ENCODE measurements at regions of chr17 and their contacts with region 1.

Region 1: GRCh38 chr17:73231841-73232586 is 29.7 kb downstream of the CPSF4L start:
- DNase-seq: peak; percentile 99
- H3K4me3 Mint-ChIP-seq: peak overlapping the region; percentile 95
- H3K27ac Mint-ChIP-seq: peak overlapping the region; percentile 95
- H3K4me1 Mint-ChIP-seq: peaks cover 45% of the 10 kb centered on the region
- H3K27me3 Mint-ChIP-seq: no peaks in the 10 kb centered on the region

Region 2: DNA sequence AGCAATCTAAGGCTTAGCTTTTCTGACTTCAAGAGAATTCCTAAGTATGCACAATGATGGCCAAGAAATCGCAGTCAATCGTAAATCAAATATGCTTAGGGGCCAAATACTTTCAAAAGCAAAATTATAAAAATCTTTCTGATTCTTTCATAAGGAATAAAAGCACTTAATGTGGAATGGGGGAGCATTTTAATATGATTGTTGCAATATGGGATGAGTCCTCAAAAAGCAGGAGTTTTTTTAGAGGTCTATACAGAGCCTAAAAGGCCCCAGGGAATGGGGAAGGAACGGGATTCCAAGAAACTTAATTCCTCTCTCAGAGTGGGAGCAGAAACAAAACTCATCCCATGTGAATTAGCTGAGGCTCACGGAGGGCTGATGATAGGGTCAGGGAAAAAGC is 124.8 kb before region 1 on chr17:
- intact Hi-C with region 1: no loop called
- DNase-seq: no peak
- H3K4me3 Mint-ChIP-seq: no peak overlapping the region
- H3K27ac Mint-ChIP-seq: no peak overlapping the region
- H3K4me1 Mint-ChIP-seq: no peaks in the 10 kb centered on the region
- H3K27me3 Mint-ChIP-seq: peaks cover 1% of the 10 kb centered on the region

Region 3: GRCh38 chr17:73192894-73193701 is 38.9 kb before region 1 on chr17 and contains the start of gene COG1:
- intact Hi-C with region 1: loop called (anchors 1 kb)
- DNase-seq: peak; percentile 90
- H3K4me3 Mint-ChIP-seq: peak within 1 kb of the TSS; percentile 93
- H3K27ac Mint-ChIP-seq: peak within 1 kb of the TSS; percentile 97
- H3K4me1 Mint-ChIP-seq: peaks cover 18% of the 10 kb centered on the region
- H3K27me3 Mint-ChIP-seq: no peaks in the 10 kb centered on the region
- total RNA-seq, gene COG1: 30.0 and 32.7 TPM in 2 replicates

Region 4: DNA sequence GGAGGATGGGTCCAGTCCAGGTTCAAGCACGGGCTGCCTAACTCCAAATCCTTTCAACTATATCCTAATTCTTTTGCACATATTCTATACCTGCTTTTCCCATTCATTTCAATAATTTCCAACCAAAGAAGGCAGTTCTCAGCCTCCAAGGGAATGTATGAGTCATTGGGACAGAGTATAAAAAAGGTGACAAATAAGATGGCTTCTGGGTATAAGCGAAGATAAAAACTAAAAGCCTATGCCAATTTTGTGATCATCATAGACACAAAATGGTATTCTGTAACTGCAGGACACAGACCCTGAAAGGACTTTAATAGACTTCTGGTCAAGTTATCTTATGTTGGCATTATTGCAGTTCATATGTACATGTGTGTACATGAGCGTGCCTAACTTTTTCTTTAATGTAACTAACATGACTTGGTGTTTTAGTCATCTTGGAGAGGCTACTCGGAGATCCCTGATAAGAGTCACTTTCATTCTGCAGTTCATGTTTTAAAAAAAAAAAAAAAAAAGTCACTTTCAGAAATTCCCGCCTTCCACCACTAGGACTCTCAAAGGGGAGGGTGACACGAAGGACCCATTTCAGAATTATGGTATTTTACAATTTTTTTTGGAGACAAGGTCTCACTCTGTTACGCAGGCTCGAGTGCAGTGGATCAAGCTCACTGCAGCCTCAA is 21.9 kb before region 1 on chr17:
- intact Hi-C with region 1: loop called (anchors 2 kb)
- DNase-seq: no peak
- H3K4me3 Mint-ChIP-seq: no peak overlapping the region
- H3K27ac Mint-ChIP-seq: peak overlapping the region; percentile 71
- H3K4me1 Mint-ChIP-seq: peaks cover 21% of the 10 kb centered on the region
- H3K27me3 Mint-ChIP-seq: no peaks in the 10 kb centered on the region

Region 5: GRCh38 chr17:73278465-73279453 is 46.7 kb after region 1 on chr17:
- intact Hi-C with region 1: no loop called
- DNase-seq: no peak
- H3K4me3 Mint-ChIP-seq: no peak overlapping the region
- H3K27ac Mint-ChIP-seq: no peak overlapping the region
- H3K4me1 Mint-ChIP-seq: no peaks in the 10 kb centered on the region
- H3K27me3 Mint-ChIP-seq: no peaks in the 10 kb centered on the region

Region 6: DNA sequence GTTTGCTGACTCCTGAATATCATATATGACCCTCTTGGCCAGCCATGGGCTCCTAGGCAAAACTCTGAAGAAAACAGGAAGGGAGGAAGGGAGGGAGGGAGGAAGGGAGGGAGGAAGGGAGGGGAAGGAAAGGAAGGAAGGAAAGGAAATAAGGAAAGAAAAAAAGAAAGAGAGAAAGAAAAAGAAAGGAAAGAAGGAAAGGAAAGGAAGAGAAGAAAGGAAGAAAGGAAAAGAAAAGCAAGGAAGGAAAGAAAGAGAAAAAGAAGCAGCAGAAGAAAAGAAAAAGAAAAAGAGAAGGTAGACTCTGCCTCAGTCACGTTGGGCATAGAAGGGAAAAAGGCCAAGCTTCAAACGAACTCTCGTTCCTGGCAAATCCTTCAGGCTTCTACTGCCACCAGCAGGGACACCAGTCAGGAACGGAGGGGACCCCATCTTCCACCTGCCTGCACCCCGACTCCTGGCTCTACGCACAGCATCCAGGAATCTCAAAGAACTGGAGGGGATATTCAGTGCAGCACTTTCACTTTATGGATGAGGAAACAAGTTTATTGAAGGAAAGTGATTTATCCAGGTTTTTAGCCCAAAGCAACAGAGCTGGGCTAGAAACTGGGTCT is 57.7 kb after region 1 on chr17:
- intact Hi-C with region 1: no loop called
- DNase-seq: no peak
- H3K4me3 Mint-ChIP-seq: no peak overlapping the region
- H3K27ac Mint-ChIP-seq: no peak overlapping the region
- H3K4me1 Mint-ChIP-seq: peaks cover 11% of the 10 kb centered on the region
- H3K27me3 Mint-ChIP-seq: no peaks in the 10 kb centered on the region

Region 7: DNA sequence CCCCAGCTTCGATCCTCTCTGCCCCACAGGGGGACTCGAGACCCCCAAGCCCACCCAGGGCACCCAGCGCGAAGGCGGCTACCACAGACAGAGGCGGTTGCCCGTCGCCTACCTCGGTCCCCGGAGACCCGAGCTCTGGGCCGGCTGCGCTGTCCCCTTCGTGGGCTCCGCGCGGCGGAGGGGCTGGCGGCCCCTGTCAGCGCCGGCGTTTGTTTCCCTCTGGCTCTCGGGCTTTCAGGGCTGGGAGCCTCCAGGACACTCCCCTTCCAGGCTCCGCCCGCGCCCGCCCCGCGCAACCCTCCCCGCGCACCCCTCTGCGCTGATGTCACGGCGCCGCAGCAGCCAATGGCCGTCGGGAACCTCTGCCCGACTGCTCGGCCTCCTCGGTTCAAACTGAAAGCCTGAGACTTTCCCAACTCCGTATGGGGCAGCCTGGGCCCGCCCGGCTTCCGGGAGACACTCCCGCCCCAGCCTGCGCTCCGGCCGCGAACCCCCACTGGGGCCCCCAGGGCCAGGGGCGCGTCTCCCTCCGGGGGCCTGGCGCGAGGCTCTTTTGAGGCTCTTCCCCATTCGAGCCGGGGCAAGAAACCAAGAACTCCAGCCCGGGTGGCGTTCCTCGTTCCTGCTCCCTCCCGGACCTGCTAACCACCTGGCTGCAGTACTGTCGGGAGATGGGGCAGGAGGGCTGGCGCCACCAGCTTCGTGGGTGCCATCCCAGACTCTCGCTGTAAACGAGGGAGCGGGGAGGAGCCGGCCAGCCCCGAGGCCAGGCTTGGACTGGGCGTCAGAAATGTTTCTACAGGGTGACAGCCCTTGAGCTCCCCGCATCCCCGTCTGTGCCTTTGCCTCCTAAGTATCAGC is 80.0 kb after region 1 on chr17 and contains the start of gene CDC42EP4:
- intact Hi-C with region 1: loop called (anchors 1 kb)
- DNase-seq: peak; percentile 97
- H3K4me3 Mint-ChIP-seq: peak within 1 kb of the TSS; percentile 86
- H3K27ac Mint-ChIP-seq: peak within 1 kb of the TSS; percentile 25
- H3K4me1 Mint-ChIP-seq: peaks cover 5% of the 10 kb centered on the region
- H3K27me3 Mint-ChIP-seq: peaks cover 9% of the 10 kb centered on the region
- total RNA-seq, gene CDC42EP4: 0.86 and 0.95 TPM in 2 replicates

Region 8: DNA sequence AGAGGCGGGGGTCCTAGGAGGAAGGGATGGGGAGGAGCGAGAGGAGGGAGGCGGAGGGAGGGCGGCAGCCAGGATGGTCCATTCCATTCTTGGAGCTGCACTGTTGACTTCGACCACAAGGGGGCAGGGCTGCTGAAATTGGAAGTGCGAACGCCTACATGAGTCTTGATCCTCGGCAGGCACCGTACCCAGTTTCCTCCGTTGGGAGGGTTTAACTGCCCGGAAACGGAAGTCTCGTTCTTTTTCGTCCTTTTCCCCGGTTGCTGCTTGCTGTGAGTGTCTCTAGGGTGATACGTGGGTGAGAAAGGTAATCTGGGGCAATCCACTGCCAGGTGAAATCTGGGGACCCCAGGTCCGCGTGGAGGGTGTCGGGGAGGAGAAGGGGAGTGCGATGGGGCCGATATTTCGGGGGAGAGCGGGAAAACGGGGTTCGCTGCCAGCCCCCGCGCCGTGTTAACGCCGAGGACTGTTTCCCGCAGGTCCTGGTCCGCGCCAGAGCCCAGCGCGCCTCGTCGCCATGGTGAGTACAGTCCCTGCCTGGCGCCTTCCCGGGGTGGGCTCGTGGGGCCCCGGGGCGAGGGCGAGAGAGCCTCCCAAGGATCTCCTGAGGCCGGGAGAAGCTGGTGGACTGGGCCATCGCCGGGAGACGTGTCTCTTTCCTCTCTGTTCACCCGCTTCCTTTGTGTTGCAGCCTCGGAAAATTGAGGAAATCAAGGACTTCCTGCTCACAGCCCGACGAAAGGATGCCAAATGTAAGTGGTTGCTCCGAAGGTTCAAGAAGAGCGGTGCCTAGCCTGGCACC is 971.6 kb after region 1 on chr17 and contains the start of gene RPL38:
- intact Hi-C with region 1: loop called (anchors 2 kb)
- DNase-seq: peak; percentile 98
- H3K4me3 Mint-ChIP-seq: peak within 1 kb of the TSS; percentile 94
- H3K27ac Mint-ChIP-seq: peak within 1 kb of the TSS; percentile 95
- H3K4me1 Mint-ChIP-seq: peaks cover 36% of the 10 kb centered on the region
- H3K27me3 Mint-ChIP-seq: peaks cover 15% of the 10 kb centered on the region
- total RNA-seq, gene RPL38: 1,176 and 1,244 TPM in 2 replicates